AG04450 (cell line): ENCODE measurements at regions of chr17 and their contacts with region 1.

Region 1: DNA sequence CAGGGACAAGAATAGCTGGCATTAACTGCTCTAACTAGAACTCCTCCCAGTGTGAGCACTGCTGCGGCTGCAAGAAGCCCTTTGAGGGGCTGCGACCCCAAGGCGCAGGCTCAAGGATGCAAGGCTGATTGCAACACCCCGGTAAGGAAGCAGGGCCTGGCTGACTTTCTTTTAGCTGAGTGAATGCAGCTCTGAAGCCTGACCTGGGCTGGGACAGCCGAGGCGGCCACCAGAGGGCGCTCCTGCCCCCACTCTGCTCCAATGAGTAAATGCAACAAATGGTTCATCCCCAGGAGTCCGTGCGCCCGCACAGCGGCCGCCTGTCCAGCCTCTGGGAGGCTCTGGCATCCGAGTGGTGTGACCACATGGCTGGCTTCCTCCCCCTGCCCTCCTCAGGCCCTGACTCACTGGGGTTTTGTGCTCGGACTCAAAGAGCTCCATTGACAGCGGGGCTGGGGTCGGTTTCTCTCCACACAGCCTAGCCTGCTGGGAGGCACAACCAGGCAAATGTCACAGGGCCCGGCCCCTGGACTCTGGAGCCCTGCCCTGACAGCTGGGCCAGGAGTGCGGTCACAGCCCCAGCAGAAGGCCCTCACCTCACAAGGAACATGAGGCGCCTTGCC is at the start of gene SMIM5:
- DNase-seq: peak; percentile 62
- H3K4me3 ChIP-seq: no peak within 1 kb of the TSS
- H3K27ac ChIP-seq: peak within 1 kb of the TSS; percentile 70
- H3K27me3 ChIP-seq: no peaks in the 10 kb centered on the region
- CTCF ChIP-seq: peak; percentile 93
- polyA plus RNA-seq, gene SMIM5: not detected in 2 replicates

Region 2: GRCh38 chr17:75589012-75589918 is 43.7 kb before region 1 on chr17:
- CTCF ChIA-PET with region 1: interaction called, 10 read pairs
- POLR2A ChIA-PET with region 1: no interaction called
- DNase-seq: peak; percentile 48
- H3K4me3 ChIP-seq: peak overlapping the region; percentile 66
- H3K27ac ChIP-seq: no peak overlapping the region
- H3K27me3 ChIP-seq: peaks cover 31% of the 10 kb centered on the region
- CTCF ChIP-seq: peak; percentile 21; the same call in 1 of the 2 replicates

Region 3: GRCh38 chr17:75619506-75620431 is 13.2 kb before region 1 on chr17:
- CTCF ChIA-PET with region 1: interaction called, 49 read pairs
- POLR2A ChIA-PET with region 1: interaction called, 3 read pairs
- DNase-seq: peak; percentile 11
- H3K4me3 ChIP-seq: no peak overlapping the region
- H3K27ac ChIP-seq: no peak overlapping the region
- H3K27me3 ChIP-seq: peaks cover 15% of the 10 kb centered on the region
- CTCF ChIP-seq: peak; percentile 63

Region 4: DNA sequence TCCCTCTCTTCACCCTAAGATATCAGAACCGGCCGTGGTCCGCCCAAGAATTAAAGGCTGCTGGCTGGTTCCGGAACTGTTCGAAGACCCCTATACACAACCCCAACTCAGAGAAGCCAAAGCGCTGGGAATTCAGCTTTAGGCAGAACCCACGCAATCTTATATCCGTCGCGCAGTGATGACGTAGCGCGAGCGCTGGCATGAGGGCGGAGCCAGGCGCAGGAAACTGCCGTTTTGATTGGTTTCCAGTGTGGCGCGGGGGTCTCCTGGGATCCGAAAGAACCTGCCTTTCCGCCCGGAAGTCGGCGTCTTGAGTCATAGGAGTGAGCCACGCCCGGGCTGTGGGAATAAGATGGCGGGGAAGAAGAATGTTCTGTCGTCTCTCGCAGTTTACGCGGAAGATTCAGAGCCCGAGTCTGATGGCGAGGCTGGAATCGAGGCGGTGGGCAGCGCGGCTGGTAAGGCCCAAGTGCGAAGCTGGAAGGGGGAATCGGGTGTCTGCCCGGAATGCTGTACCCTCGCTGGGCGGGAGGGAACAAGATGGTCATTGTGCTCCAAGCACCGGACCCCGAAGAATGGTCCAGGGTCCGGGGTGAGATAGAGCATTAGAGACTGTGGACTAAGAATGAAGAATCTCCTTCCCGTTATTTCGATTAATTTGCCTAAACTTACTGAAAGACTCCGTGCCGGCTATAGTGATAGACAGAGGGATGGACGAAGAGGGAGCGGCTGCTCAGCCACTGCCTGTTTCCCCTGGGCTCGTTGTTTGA is 34.2 kb after region 1 on chr17 and contains the starts of genes RECQL5 and SAP30BP:
- CTCF ChIA-PET with region 1: interaction called, 21 read pairs
- POLR2A ChIA-PET with region 1: interaction called, 8 read pairs
- DNase-seq: peak; percentile 98
- H3K4me3 ChIP-seq: peak within 1 kb of the TSS; percentile 100
- H3K27ac ChIP-seq: peak within 1 kb of the TSS; percentile 77
- H3K27me3 ChIP-seq: no peaks in the 10 kb centered on the region
- CTCF ChIP-seq: no peak
- polyA plus RNA-seq, gene RECQL5: 9.3 and 11.9 TPM in 2 replicates
- polyA plus RNA-seq, gene SAP30BP: 74.2 and 75.4 TPM in 2 replicates

Region 5: DNA sequence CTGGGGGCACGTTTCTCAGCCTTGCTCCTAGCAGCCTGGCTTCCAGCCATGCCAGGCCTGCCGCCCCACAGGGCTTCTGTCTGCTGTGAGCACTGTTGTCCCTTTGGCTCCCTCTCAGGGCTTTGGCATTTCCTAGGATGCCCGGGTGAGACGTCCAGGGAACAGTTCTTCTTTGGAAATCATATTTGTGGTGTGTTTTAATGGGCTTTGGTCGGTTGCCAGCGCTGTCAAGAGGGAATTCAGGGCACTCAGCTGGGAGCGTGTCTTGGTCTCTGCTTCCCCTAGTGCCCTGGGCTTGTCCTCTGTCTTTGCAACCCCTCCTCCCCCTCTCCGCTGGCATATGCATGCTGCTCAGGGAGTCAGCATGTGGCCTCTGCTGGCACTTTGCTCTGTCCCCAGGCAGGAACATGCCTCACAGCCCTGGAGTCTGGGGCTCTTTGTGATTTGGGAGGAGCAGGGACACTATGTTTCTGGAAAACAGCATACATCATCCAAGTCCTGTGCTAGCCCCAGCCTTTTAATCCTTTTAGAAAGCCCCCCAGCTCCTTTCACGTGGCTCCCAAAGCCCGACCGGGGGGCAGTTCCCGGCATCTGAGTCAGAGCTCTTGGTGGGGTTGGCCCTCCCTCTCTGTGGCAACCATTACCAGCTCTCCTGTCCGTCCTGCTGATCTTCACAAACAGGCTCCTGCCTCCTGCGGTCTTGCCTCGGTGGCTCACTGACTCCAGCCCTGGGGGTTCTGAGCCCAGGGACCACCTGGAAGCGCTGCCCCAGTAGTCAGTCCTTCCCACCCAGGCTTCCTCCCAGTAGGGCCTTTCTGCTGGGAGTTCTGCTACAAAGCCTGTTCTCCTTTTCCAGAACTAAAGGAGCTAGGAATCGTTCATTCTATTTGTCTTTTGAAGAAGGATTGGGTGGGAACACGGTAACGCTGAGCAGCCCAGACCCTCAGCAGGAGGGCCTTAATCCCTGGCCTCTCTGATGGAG is 60.8 kb after region 1 on chr17:
- CTCF ChIA-PET with region 1: interaction called, 17 read pairs
- POLR2A ChIA-PET with region 1: no interaction called
- DNase-seq: no peak
- H3K4me3 ChIP-seq: no peak overlapping the region
- H3K27ac ChIP-seq: peak overlapping the region; percentile 31
- H3K27me3 ChIP-seq: no peaks in the 10 kb centered on the region
- CTCF ChIP-seq: no peak

Region 6: DNA sequence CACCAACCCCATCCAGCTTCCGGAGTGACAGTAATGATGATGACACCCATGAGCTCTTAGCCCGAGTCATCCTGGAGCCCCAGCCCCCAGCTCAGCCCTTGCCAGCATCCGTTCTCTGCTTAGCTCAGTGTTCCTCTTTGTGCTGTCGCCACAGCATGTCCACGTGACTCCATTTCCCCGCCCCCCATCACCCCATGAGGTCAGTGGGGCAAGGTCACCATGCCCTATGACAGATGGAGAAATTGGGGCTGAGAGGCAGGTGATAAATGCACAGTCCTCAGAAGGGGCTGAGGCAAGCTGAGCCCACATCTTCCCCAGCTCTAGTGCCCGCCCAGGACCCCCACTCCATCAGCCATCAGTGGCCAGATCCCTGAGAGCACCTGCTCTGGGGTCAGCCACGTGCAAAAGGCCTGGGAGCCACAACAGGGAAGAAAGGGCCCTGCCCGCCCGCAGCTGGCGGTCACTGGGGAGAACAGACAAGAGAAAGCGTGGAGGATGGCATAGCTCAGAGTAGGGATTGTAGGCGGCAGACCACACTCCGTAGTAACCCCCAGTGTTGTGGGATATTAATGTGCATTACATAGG is 105.3 kb after region 1 on chr17:
- CTCF ChIA-PET with region 1: interaction called, 30 read pairs
- POLR2A ChIA-PET with region 1: no interaction called
- DNase-seq: no peak
- H3K4me3 ChIP-seq: no peak overlapping the region
- H3K27ac ChIP-seq: no peak overlapping the region
- H3K27me3 ChIP-seq: peaks cover 8% of the 10 kb centered on the region
- CTCF ChIP-seq: no peak

Region 7: GRCh38 chr17:75927286-75927922 is 294.4 kb after region 1 on chr17:
- CTCF ChIA-PET with region 1: no interaction called
- POLR2A ChIA-PET with region 1: no interaction called
- DNase-seq: no peak
- H3K4me3 ChIP-seq: no peak overlapping the region
- H3K27ac ChIP-seq: no peak overlapping the region
- H3K27me3 ChIP-seq: no peaks in the 10 kb centered on the region
- CTCF ChIP-seq: peak; percentile 23; the same call in 1 of the 2 replicates